ENCODE measurements at regions of chr9 and their contacts with region 1.

Region 1: DNA sequence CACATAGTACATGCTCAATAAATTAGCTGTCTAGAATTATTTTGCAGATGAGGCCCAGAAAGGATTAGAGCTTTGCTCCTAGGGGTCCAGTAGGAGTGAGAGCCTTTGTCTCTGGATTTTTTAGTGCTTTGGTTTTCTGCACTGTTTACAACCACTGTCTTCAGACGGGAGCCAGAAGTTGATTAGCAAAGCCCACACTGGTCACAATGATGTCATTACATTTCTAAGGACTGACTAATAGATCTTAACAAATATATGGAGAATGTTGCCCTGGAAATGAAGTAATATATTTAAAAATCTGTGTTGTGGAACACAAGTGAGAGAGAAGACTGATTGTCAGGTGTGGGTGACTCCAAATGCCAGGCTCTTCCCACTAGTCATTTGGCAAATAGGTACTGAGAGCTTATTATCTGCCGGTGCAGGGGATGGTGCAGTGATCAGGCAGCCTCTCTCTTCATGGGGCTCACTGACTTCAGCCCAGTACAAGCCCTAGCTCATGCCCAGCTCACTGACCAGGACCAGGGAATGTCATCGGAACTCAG is 76.2 kb downstream of the COL15A1 start:
- DNase-seq: no peak
- H3K4me3 ChIP-seq: no peak overlapping the region
- H3K27ac ChIP-seq: peak overlapping the region in 1 of 5 donors; percentile 21
- H3K4me1 ChIP-seq: peaks cover 0 to 14% of the 10 kb centered on the region in 2 donors
- H3K27me3 ChIP-seq: no peaks in the 10 kb centered on the region
- CTCF ChIP-seq: no peak
- POLR2A ChIP-seq: no peak

Region 2: GRCh38 chr9:98962181-98962560 is 57.7 kb before region 1 on chr9:
- intact Hi-C with region 1: loop called in 1 of 2 experiments (anchors 10 kb)
- DNase-seq: no peak
- H3K4me3 ChIP-seq: no peak overlapping the region
- H3K27ac ChIP-seq: peak overlapping the region in 2 of 5 donors; percentile 11 to 73
- H3K4me1 ChIP-seq: peaks cover 0 to 43% of the 10 kb centered on the region in 2 donors
- H3K27me3 ChIP-seq: no peaks in the 10 kb centered on the region
- CTCF ChIP-seq: no peak
- POLR2A ChIP-seq: no peak

Region 3: GRCh38 chr9:99104459-99105151 is 84.7 kb after region 1 on chr9 and contains the start of gene TGFBR1:
- intact Hi-C with region 1: loop called in 1 of 2 experiments (anchors 10 kb)
- DNase-seq: peak; percentile 90 to 95 (median 92)
- H3K4me3 ChIP-seq: peak within 1 kb of the TSS; percentile 28 to 98 (median 65)
- H3K27ac ChIP-seq: peak within 1 kb of the TSS; percentile 26 to 99 (median 74)
- H3K4me1 ChIP-seq: peaks cover 6 to 23% of the 10 kb centered on the region in 2 donors
- H3K27me3 ChIP-seq: no peaks in the 10 kb centered on the region
- CTCF ChIP-seq: peak in 3 of 6 experiments; percentile 4 to 17 (median 12)
- POLR2A ChIP-seq: peak in 1 of 2 donors; percentile 78
- total RNA-seq, gene TGFBR1: 7.7 to 38.5 (median 29.1) TPM

Region 4: DNA sequence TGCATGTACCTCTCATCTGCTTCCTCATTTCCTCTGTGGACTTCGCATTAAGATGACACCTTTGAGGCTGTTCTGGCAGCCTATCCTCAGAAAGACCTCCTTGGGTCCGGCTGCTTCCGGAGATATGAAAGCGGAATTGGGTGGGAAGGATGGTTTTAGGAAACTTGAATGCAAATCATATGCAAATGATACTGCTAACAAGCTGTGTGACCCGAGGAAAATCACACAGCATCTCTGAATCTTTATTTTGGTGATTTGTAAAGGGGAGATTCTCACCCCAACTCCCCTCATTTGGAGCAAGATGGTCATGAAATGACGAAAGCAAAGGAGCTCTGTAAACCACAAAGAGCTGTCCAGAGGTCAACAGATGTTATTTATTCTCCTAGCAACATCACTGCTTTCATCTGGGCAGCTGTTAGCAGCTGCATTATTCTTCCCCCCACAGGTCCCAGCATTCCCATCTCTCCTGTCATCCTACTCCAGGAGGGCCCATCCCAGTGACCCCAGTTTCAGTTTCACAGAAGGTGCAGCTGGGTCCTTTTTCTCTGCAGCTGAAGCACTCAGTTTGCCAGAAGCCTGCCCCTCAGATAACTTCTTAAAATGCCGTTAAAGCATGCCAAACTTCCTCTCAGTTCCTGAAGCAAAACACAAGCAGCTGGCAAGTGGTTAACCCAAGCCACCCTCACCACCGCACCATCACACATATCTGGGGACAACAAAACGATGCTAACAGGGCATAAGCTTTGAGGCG is 471.7 kb after region 1 on chr9:
- intact Hi-C with region 1: no loop called
- DNase-seq: no peak
- H3K4me3 ChIP-seq: no peak overlapping the region
- H3K27ac ChIP-seq: no peak overlapping the region
- H3K4me1 ChIP-seq: no peaks in the 10 kb centered on the region
- H3K27me3 ChIP-seq: no peaks in the 10 kb centered on the region
- CTCF ChIP-seq: no peak
- POLR2A ChIP-seq: no peak

Measured in adrenal gland (tissue), 19 donors.